Naive thymus-derived CD8-positive, alpha-beta T cell (primary cell): ENCODE measurements at regions of chr6 and their contacts with region 1.

Region 1: GRCh38 chr6:42790549-42791181 is 8.8 kb downstream of the BICRAL start:
- DNase-seq: peak in 1 of 10 donors; percentile 7
- ATAC-seq: peak; percentile 17 to 18
- H3K4me3 Mint-ChIP-seq: peak overlapping the region in 8 of 10 donors; percentile 11 to 61 (median 48)
- H3K27ac Mint-ChIP-seq: peak overlapping the region in 8 of 10 donors; percentile 76 to 97 (median 86)
- H3K4me1 Mint-ChIP-seq: peaks cover 20 to 41% (median 30%) of the 10 kb centered on the region in 4 donors
- H3K27me3 Mint-ChIP-seq: no peaks in the 10 kb centered on the region

Region 2: GRCh38 chr6:42555477-42556457 is 234.9 kb before region 1 on chr6:
- POLR2A ChIA-PET with region 1: interaction called, 10 read pairs
- DNase-seq: no peak
- ATAC-seq: peak; percentile 9 to 53
- H3K4me3 Mint-ChIP-seq: no peak overlapping the region
- H3K27ac Mint-ChIP-seq: peak overlapping the region in 1 of 10 donors; percentile 50
- H3K4me1 Mint-ChIP-seq: peaks cover 0 to 8% (median 5%) of the 10 kb centered on the region in 4 donors
- H3K27me3 Mint-ChIP-seq: peaks cover 0 to 16% (median 6%) of the 10 kb centered on the region in 5 donors

Region 3: GRCh38 chr6:42928986-42929820 is 138.5 kb after region 1 on chr6 and contains the start of gene CNPY3:
- POLR2A ChIA-PET with region 1: no interaction called
- DNase-seq: peak; percentile 87 to 97 (median 94)
- ATAC-seq: peak; percentile 82
- H3K4me3 Mint-ChIP-seq: peak within 1 kb of the TSS; percentile 92 to 100 (median 96)
- H3K27ac Mint-ChIP-seq: peak within 1 kb of the TSS; percentile 97 to 100 (median 99)
- H3K4me1 Mint-ChIP-seq: peaks cover 32 to 59% (median 55%) of the 10 kb centered on the region in 4 donors
- H3K27me3 Mint-ChIP-seq: no peaks in the 10 kb centered on the region
- polyA plus RNA-seq, gene CNPY3: 90.3 to 158 (median 124) TPM